Activated B cell treated with CpG ODN at 0.5 μM for 24 hours (primary cell): ENCODE measurements at regions of chr3 and their contacts with region 1.

Region 1: GRCh38 chr3:184250167-184250828 is 826 bp downstream of the EEF1AKMT4 start:
- DNase-seq: peak; percentile 79
- ATAC-seq: peak; percentile 68
- H3K4me3 Mint-ChIP-seq: peak overlapping the region; percentile 90
- H3K27ac Mint-ChIP-seq: peak overlapping the region; percentile 94
- H3K4me1 Mint-ChIP-seq: peaks cover 19% of the 10 kb centered on the region
- H3K27me3 Mint-ChIP-seq: no peaks in the 10 kb centered on the region
- CTCF ChIP-seq: peak; percentile 88

Region 2: GRCh38 chr3:183635431-183636220 is 614.7 kb before region 1 on chr3 and contains the start of gene KLHL24:
- CTCF ChIA-PET with region 1: no interaction called
- POLR2A ChIA-PET with region 1: no interaction called
- intact Hi-C with region 1: loop called (anchors 2 kb)
- DNase-seq: peak; percentile 83
- ATAC-seq: peak; percentile 73
- H3K4me3 Mint-ChIP-seq: peak within 1 kb of the TSS; percentile 92
- H3K27ac Mint-ChIP-seq: peak within 1 kb of the TSS; percentile 92
- H3K4me1 Mint-ChIP-seq: peaks cover 27% of the 10 kb centered on the region
- H3K27me3 Mint-ChIP-seq: no peaks in the 10 kb centered on the region
- CTCF ChIP-seq: no peak
- total RNA-seq, gene KLHL24: 31.6 and 33.9 TPM in 2 replicates

Region 3: DNA sequence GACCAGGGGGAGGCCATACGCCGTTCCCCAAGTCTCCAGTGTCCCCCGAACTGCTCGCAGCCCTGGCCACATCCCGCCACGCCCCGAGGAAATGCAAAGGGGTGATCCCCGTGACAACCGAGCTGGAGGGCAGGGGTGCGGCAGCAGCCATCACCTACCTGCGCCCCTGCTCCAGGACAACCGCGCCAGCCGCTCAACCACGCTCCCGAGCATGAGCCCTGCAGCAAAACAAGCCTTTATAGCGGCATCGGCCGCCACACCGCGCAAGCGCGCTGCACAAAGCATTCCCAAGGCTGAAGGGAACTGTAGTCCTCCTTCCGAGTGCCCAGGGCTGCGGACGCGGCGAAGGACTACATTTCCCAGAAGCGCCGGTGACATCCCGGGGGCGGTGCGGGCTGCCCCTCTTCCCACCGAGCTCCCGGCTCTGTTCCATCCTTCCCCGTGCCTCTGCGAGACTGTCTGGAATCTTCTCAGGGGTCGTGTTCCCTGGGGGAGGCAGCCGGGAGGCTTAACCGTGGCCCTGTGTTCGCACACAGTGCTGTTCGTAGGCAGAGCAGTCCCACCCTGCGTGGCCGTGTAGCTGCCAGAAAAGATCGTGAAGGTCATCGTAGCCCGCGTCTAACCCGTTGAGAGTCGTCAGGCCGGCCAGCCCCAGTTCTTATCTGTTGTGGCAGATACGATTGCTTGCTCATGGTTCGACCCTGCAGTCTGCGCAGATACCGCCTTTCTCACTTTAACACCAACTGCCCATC is 232.4 kb before region 1 on chr3 and contains the start of gene ABCC5:
- CTCF ChIA-PET with region 1: no interaction called
- POLR2A ChIA-PET with region 1: no interaction called
- intact Hi-C with region 1: loop called (anchors 1 kb)
- DNase-seq: peak; percentile 70
- ATAC-seq: peak; percentile 96
- H3K4me3 Mint-ChIP-seq: peak within 1 kb of the TSS; percentile 100
- H3K27ac Mint-ChIP-seq: peak within 1 kb of the TSS; percentile 84
- H3K4me1 Mint-ChIP-seq: peaks cover 13% of the 10 kb centered on the region
- H3K27me3 Mint-ChIP-seq: peaks cover 12% of the 10 kb centered on the region
- CTCF ChIP-seq: peak; percentile 7
- total RNA-seq, gene ABCC5: 10.6 and 11.1 TPM in 2 replicates

Region 4: DNA sequence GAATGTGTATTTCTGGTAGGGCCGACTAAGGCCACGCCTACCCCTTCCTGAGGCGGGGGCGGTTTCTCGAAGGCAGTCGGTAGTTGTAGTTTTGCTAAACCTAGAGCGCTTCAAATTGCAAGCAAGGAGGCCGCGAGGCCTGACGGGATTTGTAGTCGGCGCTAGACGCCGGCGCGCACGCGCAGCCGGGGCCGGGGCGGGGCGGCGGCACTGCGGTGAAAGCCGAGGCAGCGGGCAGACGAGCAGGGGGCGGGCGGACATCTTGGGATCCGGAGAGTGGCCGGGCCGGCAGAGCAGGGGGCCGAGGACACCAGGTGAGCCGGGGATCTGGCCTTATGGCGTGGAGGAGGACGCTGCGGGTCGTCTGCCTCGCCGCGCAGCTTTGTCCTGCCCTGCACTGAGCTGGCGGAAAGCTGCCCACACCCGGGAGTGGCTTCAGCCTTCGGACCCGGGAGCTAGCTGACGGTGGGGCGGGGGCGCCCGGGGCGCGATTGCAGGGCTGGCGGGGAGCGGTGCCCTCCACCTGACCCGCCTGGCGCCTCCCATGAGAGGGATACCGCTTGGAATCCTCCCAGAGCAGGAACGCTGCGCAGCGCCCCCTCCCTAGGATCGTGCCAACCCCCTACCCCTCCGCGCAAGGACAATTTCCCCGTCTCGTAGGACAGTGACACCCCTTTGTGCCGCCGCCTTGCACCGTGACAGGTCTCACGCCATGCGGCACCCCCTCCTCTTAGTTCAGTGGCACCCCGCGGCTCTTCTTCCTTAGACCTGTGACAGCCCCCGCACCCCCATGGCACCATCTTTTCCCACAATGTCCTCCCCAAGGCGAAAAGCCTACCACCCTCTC is 75.4 kb before region 1 on chr3 and contains the start of gene AP2M1:
- CTCF ChIA-PET with region 1: interaction called, 4 read pairs
- POLR2A ChIA-PET with region 1: interaction called, 5 read pairs
- intact Hi-C with region 1: loop called (anchors 1 kb)
- DNase-seq: peak; percentile 99
- ATAC-seq: peak; percentile 97
- H3K4me3 Mint-ChIP-seq: peak within 1 kb of the TSS; percentile 90
- H3K27ac Mint-ChIP-seq: peak within 1 kb of the TSS; percentile 75
- H3K4me1 Mint-ChIP-seq: peaks cover 37% of the 10 kb centered on the region
- H3K27me3 Mint-ChIP-seq: no peaks in the 10 kb centered on the region
- CTCF ChIP-seq: no peak
- total RNA-seq, gene AP2M1: 169 and 177 TPM in 2 replicates

Region 5: DNA sequence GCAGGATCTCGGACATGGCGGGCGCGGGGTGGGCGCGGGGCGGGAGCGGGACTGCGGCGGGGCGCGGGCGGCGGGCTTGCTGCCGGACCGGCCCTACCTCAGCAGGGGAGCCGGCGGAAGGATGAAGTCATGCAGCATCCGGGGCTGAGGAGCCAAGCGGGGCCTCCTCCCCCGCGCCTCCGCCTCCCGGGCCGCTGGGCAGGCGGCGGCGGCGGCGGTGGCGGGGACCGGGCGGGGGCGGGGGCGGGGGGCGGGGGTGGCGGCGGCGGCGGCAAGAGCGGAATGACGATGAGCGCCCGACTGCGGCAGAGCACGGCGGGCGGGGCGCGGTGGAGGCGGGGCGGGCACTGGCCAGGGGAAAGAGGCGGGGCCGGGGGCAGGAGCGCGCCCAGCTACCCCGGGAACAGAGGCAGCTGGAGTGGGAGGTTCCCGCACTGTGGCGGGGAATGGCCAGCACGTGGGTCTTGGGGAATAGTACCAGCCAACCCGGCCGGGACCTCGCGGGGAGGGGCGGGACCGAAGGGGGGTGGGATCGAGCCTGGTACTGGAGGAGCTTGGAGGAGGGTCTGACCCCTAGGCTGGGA is 11.1 kb after region 1 on chr3 and contains the start of gene CAMK2N2:
- CTCF ChIA-PET with region 1: interaction called, 3 read pairs
- POLR2A ChIA-PET with region 1: interaction called, 4 read pairs
- intact Hi-C with region 1: loop called (anchors 1 kb)
- DNase-seq: peak; percentile 43
- ATAC-seq: peak; percentile 66
- H3K4me3 Mint-ChIP-seq: peak within 1 kb of the TSS; percentile 79
- H3K27ac Mint-ChIP-seq: no peak within 1 kb of the TSS
- H3K4me1 Mint-ChIP-seq: peaks cover 28% of the 10 kb centered on the region
- H3K27me3 Mint-ChIP-seq: peaks cover 51% of the 10 kb centered on the region
- CTCF ChIP-seq: no peak
- total RNA-seq, gene CAMK2N2: not detected in 2 replicates

Region 6: GRCh38 chr3:184314363-184314699 is 64.0 kb after region 1 on chr3 and contains the start of gene EIF4G1:
- CTCF ChIA-PET with region 1: no interaction called
- POLR2A ChIA-PET with region 1: no interaction called
- intact Hi-C with region 1: loop called (anchors 1 kb)
- DNase-seq: peak; percentile 92
- ATAC-seq: peak; percentile 86
- H3K4me3 Mint-ChIP-seq: peak within 1 kb of the TSS; percentile 86
- H3K27ac Mint-ChIP-seq: peak within 1 kb of the TSS; percentile 88
- H3K4me1 Mint-ChIP-seq: peaks cover 28% of the 10 kb centered on the region
- H3K27me3 Mint-ChIP-seq: no peaks in the 10 kb centered on the region
- CTCF ChIP-seq: no peak
- total RNA-seq, gene EIF4G1: 292 and 319 TPM in 2 replicates

Region 7: DNA sequence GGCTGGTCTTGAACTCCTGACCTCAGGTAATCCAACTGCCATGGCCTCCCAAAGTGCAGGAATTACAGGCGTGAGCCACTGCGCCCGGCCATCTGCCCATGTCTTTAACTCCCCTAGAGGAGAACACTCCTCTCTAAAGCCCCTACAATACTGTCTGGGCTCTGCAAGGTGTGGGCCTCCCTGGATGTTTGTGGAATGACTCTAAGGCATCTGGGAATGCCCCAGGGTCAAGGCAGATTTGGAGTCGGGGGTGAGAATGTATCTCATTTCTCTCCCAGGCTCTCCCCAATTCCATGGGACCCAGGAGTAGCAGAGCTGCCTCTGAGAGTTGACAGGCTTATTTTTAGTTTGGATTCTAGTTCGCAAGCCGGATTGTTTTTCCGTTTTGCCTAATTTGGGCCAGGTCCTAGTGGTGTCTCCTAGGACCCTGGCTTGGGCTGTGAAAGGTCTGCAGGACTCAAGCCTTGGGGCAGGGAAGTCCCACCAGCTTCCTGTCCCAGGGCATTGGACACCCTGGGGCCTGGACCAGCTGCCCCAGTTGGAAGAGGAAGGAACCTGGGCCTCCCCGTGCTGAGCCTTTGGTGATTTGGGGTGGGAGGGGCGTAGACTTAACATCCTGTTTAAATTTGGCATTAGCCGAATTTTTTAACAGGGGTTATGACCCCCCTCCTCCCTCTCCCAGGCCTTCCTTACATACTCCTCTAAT is 408.1 kb after region 1 on chr3:
- CTCF ChIA-PET with region 1: no interaction called
- POLR2A ChIA-PET with region 1: interaction called, 10 read pairs
- intact Hi-C with region 1: no loop called
- DNase-seq: no peak
- ATAC-seq: no peak
- H3K4me3 Mint-ChIP-seq: no peak overlapping the region
- H3K27ac Mint-ChIP-seq: no peak overlapping the region
- H3K4me1 Mint-ChIP-seq: peaks cover 7% of the 10 kb centered on the region
- H3K27me3 Mint-ChIP-seq: no peaks in the 10 kb centered on the region
- CTCF ChIP-seq: no peak